Gastrocnemius medialis (tissue), 4 donors: ENCODE measurements at regions of chr3 and their contacts with region 1.

Region 1: GRCh38 chr3:62622553-62623193 is 249.3 kb upstream of the FEZF2 start:
- DNase-seq: no peak
- ATAC-seq: no peak
- H3K4me3 ChIP-seq: no peak overlapping the region
- H3K27ac ChIP-seq: no peak overlapping the region
- H3K4me1 ChIP-seq: no peaks in the 10 kb centered on the region
- H3K27me3 ChIP-seq: no peaks in the 10 kb centered on the region
- CTCF ChIP-seq: peak; percentile 4 to 57 (median 30)
- POLR2A ChIP-seq: no peak

Region 2: DNA sequence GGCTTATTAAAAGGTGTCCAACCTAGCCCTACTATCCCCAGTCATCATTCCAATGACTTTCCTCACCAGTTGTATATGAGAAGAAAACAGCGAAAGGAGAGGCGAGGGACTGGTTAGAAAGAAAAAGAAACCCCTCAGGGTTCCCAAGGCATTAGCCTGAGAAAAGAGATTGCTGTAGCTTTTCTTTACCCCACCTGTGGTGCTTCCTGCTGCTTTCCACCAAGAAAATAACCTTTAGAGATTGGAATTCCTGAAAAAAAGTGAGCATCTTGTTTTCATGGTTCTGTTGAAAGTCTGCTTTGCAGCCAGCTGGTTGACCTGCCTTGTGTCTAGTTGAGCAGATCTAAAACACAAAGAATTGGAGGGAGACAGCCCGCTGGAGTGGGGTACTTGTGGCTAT is 56.2 kb after region 1 on chr3:
- in situ Hi-C with region 1: no loop called
- intact Hi-C with region 1: no loop called
- DNase-seq: no peak
- ATAC-seq: no peak
- H3K4me3 ChIP-seq: no peak overlapping the region
- H3K27ac ChIP-seq: no peak overlapping the region
- H3K4me1 ChIP-seq: no peaks in the 10 kb centered on the region
- H3K27me3 ChIP-seq: no peaks in the 10 kb centered on the region
- CTCF ChIP-seq: no peak
- POLR2A ChIP-seq: no peak

Region 3: GRCh38 chr3:63228087-63229023 is 605.7 kb after region 1 on chr3:
- in situ Hi-C with region 1: loop called in 1 of 4 experiments (anchors 25 kb)
- intact Hi-C with region 1: loop called (anchors 5 kb)
- DNase-seq: no peak
- ATAC-seq: no peak
- H3K4me3 ChIP-seq: no peak overlapping the region
- H3K27ac ChIP-seq: no peak overlapping the region
- H3K4me1 ChIP-seq: no peaks in the 10 kb centered on the region
- H3K27me3 ChIP-seq: no peaks in the 10 kb centered on the region
- CTCF ChIP-seq: peak in 2 of 5 experiments; percentile 16 to 37
- POLR2A ChIP-seq: no peak

Region 4: DNA sequence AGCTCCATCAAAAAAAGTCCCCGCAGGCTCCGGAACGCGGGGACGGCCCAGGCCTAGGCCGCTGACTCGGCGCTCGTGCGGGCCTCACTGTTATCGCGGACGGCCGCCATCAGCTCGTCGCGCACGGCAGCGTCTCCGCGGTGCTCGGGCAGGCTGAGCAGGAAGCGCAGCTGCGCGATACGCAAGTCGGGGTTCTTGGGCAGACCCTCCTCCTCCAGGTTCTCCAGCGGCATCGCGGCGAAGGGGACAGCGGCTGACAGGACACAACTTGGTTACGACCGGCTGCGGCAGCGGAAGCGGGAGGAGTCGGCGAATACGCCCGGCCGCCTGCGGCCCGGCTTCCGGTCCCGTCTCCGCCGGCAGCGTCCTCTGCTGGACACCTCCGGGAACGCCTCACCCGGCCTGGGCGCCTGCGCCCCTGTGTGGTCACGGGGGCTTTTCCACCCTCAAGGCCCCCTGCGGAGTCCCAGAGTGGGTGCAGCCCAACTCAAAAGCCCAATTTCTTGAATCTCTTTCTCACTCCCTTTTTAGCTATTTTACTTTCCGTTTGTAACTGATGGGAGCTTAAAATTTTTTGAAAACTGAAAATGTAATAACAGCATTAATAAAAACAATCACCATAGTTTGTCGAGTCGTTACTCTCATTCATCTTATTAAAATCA is 1400.6 kb after region 1 on chr3 and contains the start of gene PSMD6:
- in situ Hi-C with region 1: no loop called
- intact Hi-C with region 1: no loop called
- DNase-seq: peak; percentile 78 to 81
- ATAC-seq: peak; percentile 91 to 93
- H3K4me3 ChIP-seq: peak within 1 kb of the TSS; percentile 83 to 98 (median 88)
- H3K27ac ChIP-seq: peak within 1 kb of the TSS; percentile 83 to 91 (median 88)
- H3K4me1 ChIP-seq: peaks cover 19% of the 10 kb centered on the region in 2 donors
- H3K27me3 ChIP-seq: no peaks in the 10 kb centered on the region
- CTCF ChIP-seq: peak; percentile 94 to 100 (median 98)
- POLR2A ChIP-seq: peak; percentile 28 to 63
- total RNA-seq, gene PSMD6: 150 to 220 (median 180) TPM